ENCODE measurements at regions of chr11 and their contacts with region 1.

Region 1: DNA sequence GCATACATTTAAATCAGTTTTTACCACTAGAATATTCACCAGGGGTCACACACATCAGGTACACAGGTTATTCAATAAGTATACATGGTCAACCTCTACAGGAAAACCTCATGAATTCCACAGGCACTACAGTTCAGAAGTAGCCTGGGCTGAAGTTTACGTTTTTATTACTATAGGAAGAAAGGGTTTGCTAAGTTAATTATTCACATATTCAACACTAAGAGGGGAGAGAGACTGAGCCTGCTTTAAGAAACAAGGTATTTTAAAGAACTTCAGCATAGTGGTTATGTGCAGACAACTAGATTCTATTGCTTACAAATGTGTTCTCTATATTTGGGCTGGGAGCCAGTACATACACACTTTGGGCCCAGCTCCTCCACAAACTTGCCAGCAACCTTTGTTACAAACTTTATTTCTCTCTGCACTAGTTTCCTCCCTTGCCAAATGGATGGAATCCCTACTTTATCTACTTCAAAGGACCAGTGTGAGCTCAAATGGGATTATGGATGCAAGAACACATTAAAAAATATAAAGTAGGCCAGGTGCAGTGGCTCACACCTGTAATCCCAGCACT is 31.9 kb downstream of the IL18BP start:
- DNase-seq: no peak
- ATAC-seq: no peak
- H3K4me3 ChIP-seq: no peak overlapping the region
- H3K4me3 Mint-ChIP-seq: peak overlapping the region in 1 of 3 donors; percentile 30
- H3K27ac ChIP-seq: peak overlapping the region; percentile 10
- H3K27ac Mint-ChIP-seq: peak overlapping the region; percentile 30 to 76
- H3K4me1 ChIP-seq: peaks cover 2 to 30% of the 10 kb centered on the region in 2 experiments
- H3K4me1 Mint-ChIP-seq: peaks cover 62 to 66% (median 63%) of the 10 kb centered on the region in 3 donors
- H3K27me3 ChIP-seq: no peaks in the 10 kb centered on the region
- H3K27me3 Mint-ChIP-seq: no peaks in the 10 kb centered on the region

Region 2: GRCh38 chr11:71504530-71504929 is 526.0 kb before region 1 on chr11:
- CTCF ChIA-PET with region 1: no interaction called
- POLR2A ChIA-PET with region 1: no interaction called
- DNase-seq: no peak
- ATAC-seq: no peak
- H3K4me3 ChIP-seq: no peak overlapping the region
- H3K4me3 Mint-ChIP-seq: no peak overlapping the region
- H3K27ac ChIP-seq: no peak overlapping the region
- H3K27ac Mint-ChIP-seq: no peak overlapping the region
- H3K4me1 ChIP-seq: no peaks in the 10 kb centered on the region
- H3K4me1 Mint-ChIP-seq: no peaks in the 10 kb centered on the region
- H3K27me3 ChIP-seq: no peaks in the 10 kb centered on the region
- H3K27me3 Mint-ChIP-seq: no peaks in the 10 kb centered on the region

Region 3: DNA sequence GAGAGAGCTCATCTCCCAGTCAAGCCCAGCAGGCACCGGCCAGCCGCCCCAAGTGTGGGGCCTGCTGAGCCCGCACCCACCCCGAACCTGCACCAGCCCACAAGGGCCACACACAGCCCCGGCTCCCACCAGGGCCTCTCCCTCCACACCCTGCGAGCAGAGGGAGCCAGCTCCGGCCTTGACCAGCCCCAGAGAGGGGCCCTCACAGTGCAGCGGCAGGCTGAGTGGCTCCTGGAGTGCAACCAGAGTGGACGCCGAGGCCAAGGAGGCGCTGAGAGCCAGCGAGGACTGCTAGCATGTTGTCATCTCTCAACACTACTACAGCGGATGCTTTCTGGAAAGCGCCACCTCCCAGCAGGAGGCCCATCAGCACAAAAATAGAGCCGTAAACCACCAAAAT is 186.7 kb before region 1 on chr11:
- CTCF ChIA-PET with region 1: no interaction called
- POLR2A ChIA-PET with region 1: no interaction called
- DNase-seq: no peak
- ATAC-seq: no peak
- H3K4me3 ChIP-seq: no peak overlapping the region
- H3K4me3 Mint-ChIP-seq: no peak overlapping the region
- H3K27ac ChIP-seq: no peak overlapping the region
- H3K27ac Mint-ChIP-seq: no peak overlapping the region
- H3K4me1 ChIP-seq: no peaks in the 10 kb centered on the region
- H3K4me1 Mint-ChIP-seq: no peaks in the 10 kb centered on the region
- H3K27me3 ChIP-seq: no peaks in the 10 kb centered on the region
- H3K27me3 Mint-ChIP-seq: no peaks in the 10 kb centered on the region

Region 4: GRCh38 chr11:72040726-72041441 is 10.3 kb after region 1 on chr11:
- CTCF ChIA-PET with region 1: interaction called, 9 to 28 read pairs
- POLR2A ChIA-PET with region 1: interaction called, 3 to 8 read pairs
- DNase-seq: peak; percentile 69 to 90 (median 78)
- ATAC-seq: peak; percentile 70 to 84 (median 72)
- H3K4me3 ChIP-seq: peak overlapping the region; percentile 78 to 81
- H3K4me3 Mint-ChIP-seq: no peak overlapping the region
- H3K27ac ChIP-seq: peak overlapping the region; percentile 92
- H3K27ac Mint-ChIP-seq: no peak overlapping the region
- H3K4me1 ChIP-seq: peaks cover 55 to 65% of the 10 kb centered on the region in 2 experiments
- H3K4me1 Mint-ChIP-seq: peaks cover 43 to 51% (median 50%) of the 10 kb centered on the region in 3 donors
- H3K27me3 ChIP-seq: no peaks in the 10 kb centered on the region
- H3K27me3 Mint-ChIP-seq: no peaks in the 10 kb centered on the region

Region 5: GRCh38 chr11:72091005-72091691 is 60.6 kb after region 1 on chr11:
- CTCF ChIA-PET with region 1: interaction called, 24 to 40 read pairs
- POLR2A ChIA-PET with region 1: no interaction called
- DNase-seq: peak; percentile 43 to 82 (median 67)
- ATAC-seq: peak; percentile 89 to 99 (median 90)
- H3K4me3 ChIP-seq: no peak overlapping the region
- H3K4me3 Mint-ChIP-seq: no peak overlapping the region
- H3K27ac ChIP-seq: no peak overlapping the region
- H3K27ac Mint-ChIP-seq: peak overlapping the region; percentile 6 to 70
- H3K4me1 ChIP-seq: peaks cover 0 to 4% of the 10 kb centered on the region in 2 experiments
- H3K4me1 Mint-ChIP-seq: peaks cover 10 to 12% (median 11%) of the 10 kb centered on the region in 3 donors
- H3K27me3 ChIP-seq: no peaks in the 10 kb centered on the region
- H3K27me3 Mint-ChIP-seq: no peaks in the 10 kb centered on the region

Region 6: DNA sequence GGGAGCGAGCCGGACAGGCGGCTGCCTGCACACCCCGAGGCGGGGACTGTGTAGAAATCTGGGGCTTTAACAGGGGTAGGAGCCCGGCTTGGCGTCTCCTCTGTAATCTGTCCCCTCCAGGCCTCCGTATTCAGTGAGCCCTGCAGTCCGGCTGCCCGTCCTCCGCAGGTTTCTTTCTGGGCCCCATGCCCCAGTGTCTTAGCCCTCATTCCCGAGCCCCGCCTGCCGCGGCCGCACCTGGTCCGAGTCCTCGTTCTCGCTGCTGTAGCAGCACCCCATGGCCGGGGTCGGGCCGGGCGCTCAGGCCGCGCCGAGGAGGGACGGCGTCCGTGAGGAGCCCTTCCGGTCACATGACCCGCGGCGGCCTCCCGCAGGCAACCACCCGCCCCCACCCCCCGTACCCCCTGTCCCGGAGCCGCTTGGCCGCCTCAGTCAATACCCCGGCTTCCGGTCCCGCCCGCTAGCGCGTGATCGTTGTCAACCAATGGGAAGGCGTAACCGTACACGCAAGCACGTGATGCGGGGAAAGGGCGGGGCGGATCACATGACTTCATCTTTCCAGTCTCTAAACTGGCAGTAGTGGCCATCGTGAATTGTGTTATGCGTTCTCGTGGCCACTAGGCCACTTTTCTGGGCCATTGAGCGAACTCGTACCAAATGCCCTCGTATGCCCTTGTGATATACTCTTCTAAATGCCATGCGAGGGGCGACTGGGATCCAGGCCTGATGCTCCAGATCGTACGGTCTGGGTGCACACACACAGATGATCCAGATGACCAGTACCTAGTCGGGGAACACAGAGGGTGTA is 72.6 kb after region 1 on chr11 and contains the start of gene LAMTOR1:
- CTCF ChIA-PET with region 1: interaction called, 3 to 4 read pairs
- POLR2A ChIA-PET with region 1: interaction called in 1 of 2 experiments, 10 read pairs
- DNase-seq: peak; percentile 94 to 99 (median 97)
- ATAC-seq: peak; percentile 96 to 99 (median 97)
- H3K4me3 ChIP-seq: peak within 1 kb of the TSS; percentile 82 to 89
- H3K4me3 Mint-ChIP-seq: peak within 1 kb of the TSS; percentile 77 to 92 (median 89)
- H3K27ac ChIP-seq: peak within 1 kb of the TSS; percentile 86
- H3K27ac Mint-ChIP-seq: peak within 1 kb of the TSS; percentile 82 to 86
- H3K4me1 ChIP-seq: peaks cover 12 to 49% of the 10 kb centered on the region in 2 experiments
- H3K4me1 Mint-ChIP-seq: peaks cover 44 to 49% (median 47%) of the 10 kb centered on the region in 3 donors
- H3K27me3 ChIP-seq: no peaks in the 10 kb centered on the region
- H3K27me3 Mint-ChIP-seq: no peaks in the 10 kb centered on the region
- total RNA-seq, gene LAMTOR1: 45.7 to 69.3 (median 62.5) TPM

Region 7: DNA sequence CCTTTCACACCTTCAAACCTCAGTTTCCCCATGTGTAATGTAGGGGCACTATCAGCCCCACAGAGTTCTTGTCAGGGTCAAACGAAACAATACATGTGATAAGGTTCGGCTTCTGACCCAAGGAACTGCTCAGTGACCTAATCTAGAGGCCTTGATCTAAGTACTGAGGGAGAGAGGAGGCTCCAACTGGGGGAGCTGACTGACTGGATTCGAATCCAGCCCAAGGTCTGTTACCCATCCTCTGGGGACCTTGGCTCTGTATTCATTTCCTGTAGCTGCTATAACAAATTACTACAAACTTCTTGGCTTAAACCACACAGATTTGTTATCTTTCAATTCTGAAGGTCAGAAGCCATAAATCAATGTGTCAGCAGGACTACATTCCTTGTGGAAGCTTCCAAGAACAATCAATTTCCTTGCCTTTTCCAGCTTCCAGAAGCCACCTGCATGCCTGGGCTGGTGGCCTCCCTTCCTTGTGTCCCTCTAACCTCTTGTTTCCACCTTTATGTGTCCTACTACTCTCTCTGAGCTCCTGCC is 92.6 kb after region 1 on chr11:
- CTCF ChIA-PET with region 1: no interaction called
- POLR2A ChIA-PET with region 1: no interaction called
- DNase-seq: no peak
- ATAC-seq: no peak
- H3K4me3 ChIP-seq: no peak overlapping the region
- H3K4me3 Mint-ChIP-seq: no peak overlapping the region
- H3K27ac ChIP-seq: no peak overlapping the region
- H3K27ac Mint-ChIP-seq: no peak overlapping the region
- H3K4me1 ChIP-seq: no peaks in the 10 kb centered on the region
- H3K4me1 Mint-ChIP-seq: no peaks in the 10 kb centered on the region
- H3K27me3 ChIP-seq: peaks cover 0 to 24% of the 10 kb centered on the region in 2 experiments
- H3K27me3 Mint-ChIP-seq: peaks cover 8 to 13% of the 10 kb centered on the region in 2 donors

Region 8: DNA sequence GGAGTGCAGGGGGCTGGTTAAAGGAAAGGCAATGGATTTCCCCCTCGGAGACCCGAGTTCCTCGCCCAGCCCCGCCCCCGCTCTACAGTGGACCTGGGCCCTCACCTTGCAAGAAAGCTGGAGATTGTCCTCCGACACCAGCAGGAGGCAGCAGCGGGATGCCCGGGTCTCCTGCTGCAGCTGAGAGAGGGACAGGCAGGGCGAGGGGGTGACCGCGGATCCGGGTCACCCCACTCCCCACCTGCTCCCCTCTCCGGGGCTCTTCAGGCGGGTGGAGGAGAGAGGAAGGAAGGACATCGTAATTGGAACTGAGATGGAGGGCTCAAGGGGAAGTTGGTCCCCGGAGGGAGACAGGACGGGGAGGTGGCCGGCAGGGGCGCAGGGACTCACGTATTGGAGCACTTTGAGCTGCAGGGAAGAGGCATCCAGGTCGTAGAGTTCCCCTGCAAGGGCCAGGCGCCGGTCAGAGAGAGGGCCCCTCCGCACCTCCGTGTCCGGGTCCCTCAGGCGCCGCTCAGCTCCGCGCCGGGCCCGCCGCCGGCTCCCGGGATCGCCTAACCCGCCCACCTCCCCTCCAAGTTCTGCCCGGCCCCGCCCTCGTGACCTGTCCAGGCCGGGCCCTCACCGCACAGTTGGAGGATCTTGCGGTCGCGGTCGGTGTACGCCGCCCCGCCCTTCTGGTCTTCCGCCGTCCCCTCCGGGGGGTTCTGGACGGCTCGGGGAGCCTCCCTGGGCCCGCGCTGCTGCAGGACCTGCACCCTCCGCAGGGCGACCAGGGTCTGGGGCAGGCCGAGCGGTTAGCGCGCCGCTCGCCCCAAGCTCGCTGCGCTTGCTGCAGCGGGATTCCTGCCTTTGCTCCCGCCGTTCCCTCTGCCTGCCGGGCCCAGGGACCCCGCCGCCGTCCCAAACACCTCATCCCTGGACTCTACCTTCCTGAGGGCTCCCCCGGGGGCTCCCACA is 559.5 kb after region 1 on chr11:
- CTCF ChIA-PET with region 1: no interaction called
- POLR2A ChIA-PET with region 1: no interaction called
- DNase-seq: peak in 33 of 35 experiments; percentile 16 to 68 (median 39)
- ATAC-seq: peak; percentile 20 to 37 (median 29)
- H3K4me3 ChIP-seq: peak overlapping the region; percentile 31 to 56
- H3K4me3 Mint-ChIP-seq: peak overlapping the region; percentile 64 to 87 (median 64)
- H3K27ac ChIP-seq: no peak overlapping the region
- H3K27ac Mint-ChIP-seq: no peak overlapping the region
- H3K4me1 ChIP-seq: peaks cover 0 to 36% of the 10 kb centered on the region in 2 experiments
- H3K4me1 Mint-ChIP-seq: peaks cover 38 to 40% (median 39%) of the 10 kb centered on the region in 3 donors
- H3K27me3 ChIP-seq: peaks cover 2 to 84% of the 10 kb centered on the region in 2 experiments
- H3K27me3 Mint-ChIP-seq: peaks cover 58 to 59% of the 10 kb centered on the region in 2 donors

Measured in T-cell (primary cell).